Activated T-helper 2 cell treated with anti-CD3 and anti-CD28 coated beads, Interferon-gamma antibody, Interleukin-2, Interleukin-4, amounts not matched to agents 10 μg/mL and 5 μg/mL and 100 μg/mL, durations not matched to agents 14 hours and 24 hours and 36 hours (primary cell): ENCODE measurements at regions of chr10 and their contacts with region 1.

Region 1: DNA sequence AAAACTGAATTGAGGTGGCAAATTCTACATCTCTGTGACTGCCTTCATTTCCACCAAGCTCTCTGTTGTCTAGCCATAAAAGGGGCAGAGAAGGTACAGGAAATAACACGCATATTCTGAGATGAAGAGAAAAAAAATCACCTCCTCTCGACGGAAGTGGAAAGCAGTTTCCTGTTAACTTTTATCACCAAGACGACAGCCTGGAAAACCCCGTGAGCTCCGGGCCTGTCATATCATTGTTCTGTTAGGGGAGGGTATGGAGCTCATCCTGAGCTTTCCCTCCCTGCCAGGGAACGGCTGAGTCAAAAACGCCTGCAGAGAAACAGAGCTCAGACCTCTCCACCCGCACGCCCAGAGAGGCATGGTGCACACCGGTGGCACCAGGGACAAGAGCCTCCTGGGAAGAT is 200.3 kb downstream of the PRPF18 start:
- DNase-seq: peak; percentile 73
- H3K4me3 Mint-ChIP-seq: peak overlapping the region; percentile 57
- H3K27ac Mint-ChIP-seq: peak overlapping the region; percentile 88
- H3K4me1 Mint-ChIP-seq: peaks cover 22% of the 10 kb centered on the region
- H3K27me3 Mint-ChIP-seq: no peaks in the 10 kb centered on the region

Region 2: GRCh38 chr10:14185316-14186045 is 398.5 kb after region 1 on chr10:
- intact Hi-C with region 1: loop called (anchors 1 kb)
- DNase-seq: peak; percentile 49
- H3K4me3 Mint-ChIP-seq: peak overlapping the region; percentile 23
- H3K27ac Mint-ChIP-seq: peak overlapping the region; percentile 80
- H3K4me1 Mint-ChIP-seq: peaks cover 20% of the 10 kb centered on the region
- H3K27me3 Mint-ChIP-seq: peaks cover 49% of the 10 kb centered on the region

Region 3: DNA sequence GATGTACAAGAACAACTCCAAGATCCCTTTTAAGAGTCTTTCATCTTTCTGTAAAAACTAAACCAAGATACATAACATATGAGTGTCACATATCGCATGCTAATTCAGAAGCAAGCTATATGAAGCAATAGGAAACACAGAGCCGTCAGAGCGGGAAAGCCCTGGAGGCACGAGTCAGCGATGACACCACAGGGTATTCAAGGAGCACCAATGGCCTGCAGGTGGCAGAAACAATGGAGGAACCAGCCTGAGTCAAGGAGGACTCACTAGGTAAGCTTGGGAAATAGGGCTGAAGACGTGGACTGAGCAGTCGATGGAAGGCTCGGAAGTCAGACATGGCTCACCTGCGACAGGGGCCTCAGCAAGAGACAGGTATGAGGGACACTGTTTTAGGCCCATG is 773.3 kb after region 1 on chr10:
- intact Hi-C with region 1: loop called (anchors 5 kb)
- DNase-seq: peak; percentile 52
- H3K4me3 Mint-ChIP-seq: peak overlapping the region; percentile 38
- H3K27ac Mint-ChIP-seq: peak overlapping the region; percentile 84
- H3K4me1 Mint-ChIP-seq: peaks cover 83% of the 10 kb centered on the region
- H3K27me3 Mint-ChIP-seq: no peaks in the 10 kb centered on the region